CD8-positive, alpha-beta memory T cell (primary cell): ENCODE measurements at regions of chr1 and their contacts with region 1.

Region 1: DNA sequence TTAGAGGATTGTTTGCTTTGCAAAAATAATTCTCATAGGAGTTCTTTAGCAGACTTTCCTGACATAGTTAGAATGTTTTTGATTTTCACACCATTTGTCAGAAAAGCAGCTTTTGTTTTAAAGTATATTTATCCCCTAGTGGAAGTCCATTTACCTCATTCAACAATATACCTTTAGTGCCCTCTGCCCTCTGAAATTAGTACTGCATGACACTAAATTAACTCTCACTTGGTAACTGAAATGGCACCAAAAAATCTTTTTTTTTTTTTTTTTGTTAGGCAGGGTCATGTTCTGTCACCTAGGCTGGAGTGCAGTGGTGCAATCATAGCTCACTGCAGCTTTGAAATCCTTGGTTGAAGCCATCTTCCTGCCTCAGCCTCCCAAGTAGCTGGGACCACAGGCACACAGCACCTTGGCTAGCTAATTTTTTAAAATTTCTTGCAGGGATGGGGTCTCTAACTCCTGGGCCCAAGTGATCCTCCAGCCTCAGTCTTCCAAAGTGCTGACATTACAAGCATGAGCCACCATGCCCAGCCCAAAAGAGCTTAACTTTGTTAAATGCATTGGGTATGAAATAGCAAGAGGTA is 13.6 kb downstream of the LRRC42 start:
- DNase-seq: peak in 2 of 5 donors; percentile 37 to 42
- H3K4me3 ChIP-seq: no peak overlapping the region
- H3K4me3 Mint-ChIP-seq: no peak overlapping the region
- H3K27ac ChIP-seq: no peak overlapping the region
- H3K27ac Mint-ChIP-seq: no peak overlapping the region
- H3K4me1 ChIP-seq: no peaks in the 10 kb centered on the region
- H3K4me1 Mint-ChIP-seq: peaks cover 0 to 13% (median 8%) of the 10 kb centered on the region in 3 donors
- H3K27me3 ChIP-seq: no peaks in the 10 kb centered on the region
- H3K27me3 Mint-ChIP-seq: no peaks in the 10 kb centered on the region

Region 2: GRCh38 chr1:53878492-53879105 is 81.2 kb before region 1 on chr1:
- CTCF ChIA-PET with region 1: interaction called, 25 read pairs
- POLR2A ChIA-PET with region 1: no interaction called
- DNase-seq: peak in 1 of 5 donors; percentile 20
- H3K4me3 ChIP-seq: no peak overlapping the region
- H3K4me3 Mint-ChIP-seq: no peak overlapping the region
- H3K27ac ChIP-seq: no peak overlapping the region
- H3K27ac Mint-ChIP-seq: peak overlapping the region in 1 of 8 donors; percentile 44
- H3K4me1 ChIP-seq: no peaks in the 10 kb centered on the region
- H3K4me1 Mint-ChIP-seq: peaks cover 9 to 14% (median 11%) of the 10 kb centered on the region in 3 donors
- H3K27me3 ChIP-seq: no peaks in the 10 kb centered on the region
- H3K27me3 Mint-ChIP-seq: no peaks in the 10 kb centered on the region

Region 3: GRCh38 chr1:54199151-54199764 is 239.5 kb after region 1 on chr1:
- CTCF ChIA-PET with region 1: no interaction called
- POLR2A ChIA-PET with region 1: no interaction called
- DNase-seq: no peak
- H3K4me3 ChIP-seq: peak overlapping the region; percentile 94
- H3K4me3 Mint-ChIP-seq: peak overlapping the region; percentile 88 to 96 (median 93)
- H3K27ac ChIP-seq: peak overlapping the region; percentile 64
- H3K27ac Mint-ChIP-seq: peak overlapping the region; percentile 27 to 93 (median 92)
- H3K4me1 ChIP-seq: peaks cover 19% of the 10 kb centered on the region
- H3K4me1 Mint-ChIP-seq: peaks cover 37 to 52% (median 37%) of the 10 kb centered on the region in 3 donors
- H3K27me3 ChIP-seq: no peaks in the 10 kb centered on the region
- H3K27me3 Mint-ChIP-seq: no peaks in the 10 kb centered on the region